ENCODE measurements at regions of chr21 and their contacts with region 1.

Region 1: DNA sequence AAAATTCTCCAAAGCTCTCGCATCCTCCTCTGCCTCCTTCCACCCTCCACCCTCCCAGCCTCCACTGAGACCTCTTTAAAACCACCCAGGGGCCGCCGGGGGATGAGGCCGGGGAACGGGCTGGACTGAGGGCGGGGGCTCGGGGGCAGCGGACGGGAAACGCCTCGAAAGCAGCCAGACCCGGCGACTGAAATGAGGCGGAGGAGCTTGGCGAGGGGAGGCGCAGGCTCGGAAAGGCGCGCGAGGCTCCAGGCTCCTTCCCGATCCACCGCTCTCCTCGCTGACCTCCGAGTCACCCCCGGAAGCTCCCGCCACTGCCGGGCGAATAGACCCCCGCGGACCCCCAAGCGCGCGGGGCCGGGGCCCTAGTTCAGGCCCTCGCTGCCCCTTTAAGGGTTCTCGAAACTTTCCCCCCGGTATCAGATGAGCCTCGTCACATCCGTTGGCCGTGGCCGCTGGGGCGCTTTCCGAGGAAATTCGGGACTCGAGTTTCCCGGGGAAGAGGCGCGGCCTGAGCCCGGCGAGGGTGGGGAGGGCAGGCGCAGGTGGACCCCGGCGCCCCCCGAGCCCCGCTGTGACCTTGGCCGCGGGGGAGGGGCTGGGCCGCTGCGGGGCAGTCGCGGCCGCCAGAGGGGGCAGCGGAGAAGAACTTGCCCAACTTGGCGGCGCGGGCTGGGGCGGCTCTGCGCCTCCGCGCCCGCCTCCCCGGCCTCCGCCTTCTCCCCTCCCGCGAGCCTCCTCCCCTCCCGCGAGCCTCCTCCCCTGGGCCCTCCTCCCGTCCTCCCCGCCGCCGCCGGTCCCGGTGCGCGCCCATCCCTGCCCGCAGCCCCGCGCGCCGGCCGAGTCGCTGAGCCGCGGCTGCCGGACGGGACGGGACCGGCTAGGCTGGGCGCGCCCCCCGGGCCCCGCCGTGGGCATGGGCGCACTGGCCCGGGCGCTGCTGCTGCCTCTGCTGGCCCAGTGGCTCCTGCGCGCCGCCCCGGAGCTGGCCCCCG is at the start of gene BACE2:
- DNase-seq: peak in 1 of 2 donors; percentile 91
- H3K4me3 ChIP-seq: peak within 1 kb of the TSS; percentile 92 to 99
- H3K27ac ChIP-seq: peak within 1 kb of the TSS; percentile 98 to 99
- H3K4me1 ChIP-seq: peaks cover 0 to 17% of the 10 kb centered on the region in 2 donors
- H3K27me3 ChIP-seq: no peaks in the 10 kb centered on the region
- CTCF ChIP-seq: peak; percentile 29 to 68 (median 60)
- total RNA-seq, gene BACE2: 151 TPM

Region 2: GRCh38 chr21:40990366-40990765 is 177.3 kb before region 1 on chr21:
- intact Hi-C with region 1: no loop called
- DNase-seq: no peak
- H3K4me3 ChIP-seq: no peak overlapping the region
- H3K27ac ChIP-seq: no peak overlapping the region
- H3K4me1 ChIP-seq: no peaks in the 10 kb centered on the region
- H3K27me3 ChIP-seq: no peaks in the 10 kb centered on the region
- CTCF ChIP-seq: no peak

Region 3: GRCh38 chr21:41009398-41010100 is 158.1 kb before region 1 on chr21:
- intact Hi-C with region 1: no loop called
- DNase-seq: no peak
- H3K4me3 ChIP-seq: no peak overlapping the region
- H3K27ac ChIP-seq: no peak overlapping the region
- H3K4me1 ChIP-seq: no peaks in the 10 kb centered on the region
- H3K27me3 ChIP-seq: no peaks in the 10 kb centered on the region
- CTCF ChIP-seq: no peak

Region 4: DNA sequence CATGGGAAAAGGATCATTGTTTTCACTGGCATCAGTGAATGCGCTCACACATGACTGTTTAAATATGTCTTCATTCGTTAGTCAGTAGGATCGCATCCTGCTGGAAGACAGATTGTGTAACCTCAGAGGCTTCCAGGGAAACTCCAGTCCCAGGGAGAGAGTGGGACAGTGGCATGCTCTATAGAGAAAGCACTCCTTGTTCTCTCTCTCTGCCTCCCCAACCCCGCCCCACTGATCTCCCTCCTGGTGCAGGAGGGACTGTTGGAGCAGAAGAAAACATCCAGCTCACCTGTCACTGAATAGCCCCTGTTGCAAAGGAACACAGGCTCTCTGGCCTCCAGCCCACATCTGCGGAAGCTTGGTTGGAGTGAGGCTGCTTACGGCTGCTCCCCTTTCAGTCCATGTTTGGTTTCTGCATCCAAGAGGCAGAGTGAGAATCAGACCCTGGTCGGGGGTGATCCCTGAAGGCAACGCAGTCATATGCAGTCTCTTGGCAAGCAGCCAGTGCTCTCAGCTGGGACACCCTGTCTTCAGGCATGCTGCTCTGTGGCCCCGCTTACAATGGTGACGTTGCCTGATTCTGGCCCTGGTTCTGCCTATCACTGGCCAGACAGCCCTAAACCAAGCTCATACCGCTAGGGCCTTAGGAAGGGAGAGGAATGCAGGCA is 39.9 kb after region 1 on chr21:
- intact Hi-C with region 1: loop called (anchors 1 kb)
- DNase-seq: peak in 1 of 2 donors; percentile 83
- H3K4me3 ChIP-seq: peak overlapping the region in 1 of 2 donors; percentile 12
- H3K27ac ChIP-seq: peak overlapping the region; percentile 66 to 72
- H3K4me1 ChIP-seq: peaks cover 3 to 15% of the 10 kb centered on the region in 2 donors
- H3K27me3 ChIP-seq: no peaks in the 10 kb centered on the region
- CTCF ChIP-seq: no peak

Region 5: GRCh38 chr21:41247561-41248284 is 80.1 kb after region 1 on chr21:
- intact Hi-C with region 1: loop called (anchors 1 kb)
- DNase-seq: peak; percentile 78 to 94
- H3K4me3 ChIP-seq: peak overlapping the region; percentile 36 to 45
- H3K27ac ChIP-seq: peak overlapping the region; percentile 85 to 92
- H3K4me1 ChIP-seq: peaks cover 25 to 43% of the 10 kb centered on the region in 2 donors
- H3K27me3 ChIP-seq: no peaks in the 10 kb centered on the region
- CTCF ChIP-seq: no peak

Region 6: GRCh38 chr21:41425954-41426675 is 258.5 kb after region 1 on chr21 and contains the start of gene MX1:
- intact Hi-C with region 1: loop called (anchors 5 kb)
- DNase-seq: peak in 1 of 2 donors; percentile 85
- H3K4me3 ChIP-seq: peak within 1 kb of the TSS; percentile 68 to 72
- H3K27ac ChIP-seq: peak within 1 kb of the TSS; percentile 22 to 39
- H3K4me1 ChIP-seq: peaks cover 0 to 7% of the 10 kb centered on the region in 2 donors
- H3K27me3 ChIP-seq: no peaks in the 10 kb centered on the region
- CTCF ChIP-seq: no peak
- total RNA-seq, gene MX1: 82.5 TPM

Region 7: GRCh38 chr21:41768437-41769061 is 600.9 kb after region 1 on chr21:
- intact Hi-C with region 1: loop called (anchors 5 kb)
- DNase-seq: peak in 1 of 2 donors; percentile 74
- H3K4me3 ChIP-seq: peak overlapping the region; percentile 58 to 60
- H3K27ac ChIP-seq: peak overlapping the region; percentile 74 to 83
- H3K4me1 ChIP-seq: peaks cover 0 to 11% of the 10 kb centered on the region in 2 donors
- H3K27me3 ChIP-seq: no peaks in the 10 kb centered on the region
- CTCF ChIP-seq: peak in 2 of 3 experiments; percentile 15 to 28